OCI-LY7 (cell line): ENCODE measurements at regions of chr10 and their contacts with region 1.

Region 1: DNA sequence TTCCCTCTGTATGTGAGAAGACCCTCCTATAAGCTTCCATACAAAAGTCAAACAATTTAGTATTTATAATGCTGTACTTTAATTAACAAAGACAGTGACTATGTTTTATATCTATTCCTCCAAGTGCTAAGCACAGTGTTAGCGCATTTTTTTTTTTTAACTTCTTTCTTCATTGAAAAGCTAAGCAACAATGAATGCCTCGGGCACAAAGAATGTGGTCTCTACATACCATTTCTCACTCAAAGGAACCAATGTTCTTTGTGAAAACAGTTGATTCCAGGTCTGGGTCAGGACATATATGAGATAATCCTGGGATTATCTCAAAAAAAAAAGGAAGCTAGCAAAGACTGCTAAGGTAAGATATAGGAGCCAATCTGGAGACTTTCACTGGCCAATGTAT is 26.2 kb upstream of the REEP3 start:
- DNase-seq: no peak
- H3K4me3 ChIP-seq: no peak overlapping the region
- H3K27ac ChIP-seq: no peak overlapping the region
- H3K4me1 ChIP-seq: no peaks in the 10 kb centered on the region
- CTCF ChIP-seq: no peak

Region 2: DNA sequence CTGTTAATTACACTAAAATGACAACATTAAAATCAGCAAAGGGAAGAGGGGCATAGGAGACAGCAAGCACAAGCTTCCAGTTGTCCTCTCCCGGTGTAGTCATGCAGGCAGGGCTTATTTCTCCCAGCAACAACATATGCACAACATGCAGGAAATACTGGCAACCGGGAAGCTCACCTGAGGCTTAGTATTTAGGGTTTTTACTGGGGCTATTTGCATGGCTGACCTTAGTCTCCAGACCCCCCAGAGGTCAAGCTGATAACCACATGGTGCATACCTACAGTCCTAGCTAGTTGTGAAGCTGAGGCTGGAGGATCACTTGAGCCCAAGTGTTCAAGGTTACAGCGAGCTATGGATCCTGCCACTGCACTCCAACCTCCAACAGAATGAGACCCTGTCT is 16.4 kb before region 1 on chr10:
- CTCF ChIA-PET with region 1: no interaction called
- POLR2A ChIA-PET with region 1: interaction called, 15 read pairs
- intact Hi-C with region 1: no loop called
- DNase-seq: no peak
- H3K4me3 ChIP-seq: no peak overlapping the region
- H3K27ac ChIP-seq: no peak overlapping the region
- H3K4me1 ChIP-seq: no peaks in the 10 kb centered on the region
- CTCF ChIP-seq: no peak